Activated B cell treated with CpG ODN at 0.5 μM for 24 hours (primary cell): ENCODE measurements at regions of chr15 and their contacts with region 1.

Region 1: DNA sequence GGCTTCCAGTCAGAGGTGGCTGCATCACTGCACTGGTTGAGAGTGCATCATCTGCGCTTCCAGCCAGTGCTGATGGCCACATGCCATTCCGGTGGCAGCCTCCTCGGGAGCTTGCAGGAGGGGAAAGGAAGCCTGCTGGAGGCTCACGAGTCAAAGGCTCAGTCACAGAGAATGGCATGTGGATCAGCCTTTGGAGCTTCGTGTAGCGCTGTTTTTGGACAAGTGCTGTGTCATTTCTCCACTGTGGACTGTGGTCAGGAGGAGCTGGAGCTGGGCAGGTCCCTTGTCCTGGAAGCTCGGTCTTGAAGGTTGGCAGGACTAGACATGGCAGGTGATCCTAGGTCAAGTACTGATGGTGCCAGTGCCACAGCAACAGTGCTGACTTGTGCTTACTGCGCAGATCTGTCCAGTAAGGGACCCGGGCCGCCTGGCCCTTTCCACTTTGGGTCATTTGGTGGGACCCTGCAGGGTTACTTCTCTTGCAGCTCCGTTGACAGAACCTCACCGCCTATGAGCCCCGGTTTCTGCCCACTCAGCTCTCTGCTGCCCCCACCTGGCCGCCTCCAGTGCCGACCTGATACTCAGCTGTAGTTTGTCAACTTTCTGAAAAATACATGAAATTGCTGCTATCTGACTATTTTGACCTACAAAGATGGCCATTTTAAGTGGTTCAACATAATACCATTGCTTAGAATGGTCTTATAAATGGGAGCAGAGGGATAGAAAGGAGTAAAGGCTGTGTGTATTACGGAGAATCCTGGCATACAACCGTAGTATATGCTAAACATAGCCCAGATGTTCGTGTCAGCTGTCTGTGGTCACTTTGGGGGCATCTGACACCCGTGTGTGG is 27.6 kb upstream of the TRPM1 start:
- DNase-seq: peak; percentile 83
- ATAC-seq: peak; percentile 96
- H3K4me3 Mint-ChIP-seq: no peak overlapping the region
- H3K27ac Mint-ChIP-seq: no peak overlapping the region
- H3K4me1 Mint-ChIP-seq: peaks cover 10% of the 10 kb centered on the region
- H3K27me3 Mint-ChIP-seq: no peaks in the 10 kb centered on the region
- CTCF ChIP-seq: peak; percentile 89

Region 2: DNA sequence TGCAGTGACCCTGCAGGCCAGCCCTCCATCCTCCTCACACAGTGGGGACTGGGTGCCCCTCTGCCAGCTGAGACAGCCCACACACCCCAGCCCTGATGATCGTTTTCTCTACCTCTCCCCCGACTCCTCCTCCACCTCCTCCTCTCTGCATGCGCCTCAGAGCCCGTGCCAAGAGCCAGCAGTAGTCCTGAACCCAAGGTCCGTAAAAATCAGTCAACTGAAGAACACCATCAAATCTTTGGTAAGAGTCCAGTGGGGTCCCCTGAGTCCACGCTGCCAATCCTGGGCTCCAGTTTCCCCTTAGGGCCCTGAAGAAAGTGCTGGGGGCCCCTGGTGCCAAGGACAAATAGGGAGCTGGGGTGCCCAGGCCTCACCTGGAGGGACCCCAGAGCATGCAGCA is 334.8 kb before region 1 on chr15:
- CTCF ChIA-PET with region 1: no interaction called
- POLR2A ChIA-PET with region 1: no interaction called
- intact Hi-C with region 1: loop called (anchors 2 kb)
- DNase-seq: no peak
- ATAC-seq: no peak
- H3K4me3 Mint-ChIP-seq: no peak overlapping the region
- H3K27ac Mint-ChIP-seq: no peak overlapping the region
- H3K4me1 Mint-ChIP-seq: no peaks in the 10 kb centered on the region
- H3K27me3 Mint-ChIP-seq: peaks cover 11% of the 10 kb centered on the region
- CTCF ChIP-seq: no peak

Region 3: GRCh38 chr15:30895461-30896210 is 233.5 kb before region 1 on chr15:
- CTCF ChIA-PET with region 1: interaction called, 23 read pairs
- POLR2A ChIA-PET with region 1: no interaction called
- intact Hi-C with region 1: loop called (anchors 1 kb)
- DNase-seq: no peak
- ATAC-seq: no peak
- H3K4me3 Mint-ChIP-seq: no peak overlapping the region
- H3K27ac Mint-ChIP-seq: no peak overlapping the region
- H3K4me1 Mint-ChIP-seq: peaks cover 6% of the 10 kb centered on the region
- H3K27me3 Mint-ChIP-seq: no peaks in the 10 kb centered on the region
- CTCF ChIP-seq: no peak

Region 4: GRCh38 chr15:30962079-30962478 is 167.1 kb before region 1 on chr15:
- CTCF ChIA-PET with region 1: interaction called, 26 read pairs
- POLR2A ChIA-PET with region 1: no interaction called
- intact Hi-C with region 1: no loop called
- DNase-seq: no peak
- ATAC-seq: no peak
- H3K4me3 Mint-ChIP-seq: no peak overlapping the region
- H3K27ac Mint-ChIP-seq: peak overlapping the region; percentile 5
- H3K4me1 Mint-ChIP-seq: peaks cover 14% of the 10 kb centered on the region
- H3K27me3 Mint-ChIP-seq: no peaks in the 10 kb centered on the region
- CTCF ChIP-seq: no peak

Region 5: DNA sequence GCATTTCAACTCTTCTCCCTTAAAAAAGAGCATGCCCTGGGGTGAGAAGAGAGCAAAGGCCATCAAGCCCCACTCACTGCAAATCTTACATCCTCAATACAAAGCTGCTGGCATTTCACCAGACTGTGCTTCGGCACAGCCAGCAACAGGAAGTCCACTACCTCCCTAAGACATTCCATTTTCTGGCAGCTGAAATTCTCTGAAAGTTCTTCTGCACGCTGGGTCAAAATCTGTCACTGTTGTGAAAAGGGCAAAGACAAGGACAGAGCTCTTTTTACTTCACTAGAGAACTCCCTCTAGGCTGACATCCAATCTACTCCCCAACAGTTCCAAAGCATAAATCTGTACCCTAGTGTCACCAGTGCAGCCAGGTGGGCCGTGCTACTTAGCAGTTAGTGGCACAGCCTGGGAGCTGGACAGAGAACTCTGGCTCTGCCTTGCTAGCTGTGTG is 144.0 kb before region 1 on chr15:
- CTCF ChIA-PET with region 1: interaction called, 41 read pairs
- POLR2A ChIA-PET with region 1: no interaction called
- intact Hi-C with region 1: no loop called
- DNase-seq: no peak
- ATAC-seq: peak; percentile 34
- H3K4me3 Mint-ChIP-seq: peak overlapping the region; percentile 59
- H3K27ac Mint-ChIP-seq: peak overlapping the region; percentile 83
- H3K4me1 Mint-ChIP-seq: peaks cover 75% of the 10 kb centered on the region
- H3K27me3 Mint-ChIP-seq: no peaks in the 10 kb centered on the region
- CTCF ChIP-seq: no peak

Region 6: GRCh38 chr15:31098953-31099740 is 30.0 kb before region 1 on chr15:
- CTCF ChIA-PET with region 1: interaction called, 14 read pairs
- POLR2A ChIA-PET with region 1: no interaction called
- intact Hi-C with region 1: no loop called
- DNase-seq: no peak
- ATAC-seq: no peak
- H3K4me3 Mint-ChIP-seq: peak overlapping the region; percentile 47
- H3K27ac Mint-ChIP-seq: peak overlapping the region; percentile 1
- H3K4me1 Mint-ChIP-seq: peaks cover 35% of the 10 kb centered on the region
- H3K27me3 Mint-ChIP-seq: no peaks in the 10 kb centered on the region
- CTCF ChIP-seq: no peak